ENCODE measurements at regions of chr3 and their contacts with region 1.

Region 1: GRCh38 chr3:141460097-141460704 is 26.6 kb upstream of the RASA2 start:
- DNase-seq: peak; percentile 94
- H3K4me3 Mint-ChIP-seq: no peak overlapping the region
- H3K27ac Mint-ChIP-seq: no peak overlapping the region
- H3K4me1 Mint-ChIP-seq: peaks cover 7% of the 10 kb centered on the region
- H3K27me3 Mint-ChIP-seq: no peaks in the 10 kb centered on the region

Region 2: GRCh38 chr3:141360888-141361598 is 99.2 kb before region 1 on chr3:
- CTCF ChIA-PET with region 1: interaction called, 132 read pairs
- POLR2A ChIA-PET with region 1: no interaction called
- intact Hi-C with region 1: no loop called
- DNase-seq: no peak
- H3K4me3 Mint-ChIP-seq: peak overlapping the region; percentile 30
- H3K27ac Mint-ChIP-seq: no peak overlapping the region
- H3K4me1 Mint-ChIP-seq: peaks cover 10% of the 10 kb centered on the region
- H3K27me3 Mint-ChIP-seq: peaks cover 1% of the 10 kb centered on the region

Region 3: GRCh38 chr3:141487521-141488252 is 27.5 kb after region 1 on chr3:
- CTCF ChIA-PET with region 1: interaction called, 18 read pairs
- POLR2A ChIA-PET with region 1: interaction called, 5 read pairs
- intact Hi-C with region 1: no loop called
- DNase-seq: peak; percentile 94
- H3K4me3 Mint-ChIP-seq: peak overlapping the region; percentile 84
- H3K27ac Mint-ChIP-seq: peak overlapping the region; percentile 94
- H3K4me1 Mint-ChIP-seq: peaks cover 67% of the 10 kb centered on the region
- H3K27me3 Mint-ChIP-seq: no peaks in the 10 kb centered on the region

Region 4: GRCh38 chr3:141570068-141570467 is 109.9 kb after region 1 on chr3:
- CTCF ChIA-PET with region 1: interaction called, 15 read pairs
- POLR2A ChIA-PET with region 1: no interaction called
- intact Hi-C with region 1: no loop called
- DNase-seq: no peak
- H3K4me3 Mint-ChIP-seq: no peak overlapping the region
- H3K27ac Mint-ChIP-seq: no peak overlapping the region
- H3K4me1 Mint-ChIP-seq: peaks cover 8% of the 10 kb centered on the region
- H3K27me3 Mint-ChIP-seq: no peaks in the 10 kb centered on the region

Region 5: GRCh38 chr3:141644931-141645330 is 184.7 kb after region 1 on chr3:
- CTCF ChIA-PET with region 1: interaction called, 27 read pairs
- POLR2A ChIA-PET with region 1: no interaction called
- intact Hi-C with region 1: loop called (anchors 1 kb)
- DNase-seq: peak; percentile 86
- H3K4me3 Mint-ChIP-seq: no peak overlapping the region
- H3K27ac Mint-ChIP-seq: no peak overlapping the region
- H3K4me1 Mint-ChIP-seq: no peaks in the 10 kb centered on the region
- H3K27me3 Mint-ChIP-seq: no peaks in the 10 kb centered on the region